ENCODE measurements at regions of chr4 and their contacts with region 1.

Region 1: GRCh38 chr4:124275-125081 is at the start of gene ZNF718:
- DNase-seq: peak; percentile 98
- H3K4me3 Mint-ChIP-seq: peak within 1 kb of the TSS; percentile 90
- H3K27ac Mint-ChIP-seq: peak within 1 kb of the TSS; percentile 98
- H3K4me1 Mint-ChIP-seq: peaks cover 22% of the 10 kb centered on the region
- H3K27me3 Mint-ChIP-seq: no peaks in the 10 kb centered on the region
- total RNA-seq, gene ZNF718: 12.2 to 12.8 TPM

Region 2: DNA sequence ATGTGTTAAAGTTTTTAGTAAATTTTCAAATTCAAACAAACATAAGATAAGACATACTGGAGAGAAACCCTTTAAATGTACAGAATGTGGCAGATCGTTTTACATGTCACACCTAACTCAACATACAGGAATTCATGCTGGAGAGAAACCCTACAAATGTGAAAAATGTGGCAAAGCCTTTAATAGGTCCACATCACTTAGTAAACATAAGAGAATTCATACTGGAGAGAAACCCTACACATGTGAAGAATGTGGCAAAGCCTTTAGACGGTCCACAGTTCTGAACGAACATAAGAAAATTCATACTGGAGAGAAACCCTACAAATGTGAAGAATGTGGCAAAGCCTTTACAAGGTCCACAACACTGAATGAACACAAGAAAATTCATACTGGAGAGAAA is 38.5 kb before region 1 on chr4:
- CTCF ChIA-PET with region 1: no interaction called
- intact Hi-C with region 1: no loop called
- DNase-seq: no peak
- H3K4me3 Mint-ChIP-seq: no peak overlapping the region
- H3K27ac Mint-ChIP-seq: no peak overlapping the region
- H3K4me1 Mint-ChIP-seq: no peaks in the 10 kb centered on the region
- H3K27me3 Mint-ChIP-seq: no peaks in the 10 kb centered on the region

Region 3: GRCh38 chr4:242121-242848 is 117.8 kb after region 1 on chr4:
- CTCF ChIA-PET with region 1: no interaction called
- intact Hi-C with region 1: loop called (anchors 5 kb)
- DNase-seq: peak; percentile 79
- H3K4me3 Mint-ChIP-seq: peak overlapping the region; percentile 79
- H3K27ac Mint-ChIP-seq: peak overlapping the region; percentile 55
- H3K4me1 Mint-ChIP-seq: peaks cover 7% of the 10 kb centered on the region
- H3K27me3 Mint-ChIP-seq: no peaks in the 10 kb centered on the region

Region 4: GRCh38 chr4:337143-337931 is 212.9 kb after region 1 on chr4 and contains the start of gene ZNF141:
- CTCF ChIA-PET with region 1: no interaction called
- intact Hi-C with region 1: loop called (anchors 5 kb)
- DNase-seq: peak; percentile 96
- H3K4me3 Mint-ChIP-seq: peak within 1 kb of the TSS; percentile 99
- H3K27ac Mint-ChIP-seq: peak within 1 kb of the TSS; percentile 99
- H3K4me1 Mint-ChIP-seq: peaks cover 22% of the 10 kb centered on the region
- H3K27me3 Mint-ChIP-seq: no peaks in the 10 kb centered on the region
- total RNA-seq, gene ZNF141: 21.2 to 23.2 TPM

Region 5: GRCh38 chr4:473570-474457 is 349.3 kb after region 1 on chr4:
- CTCF ChIA-PET with region 1: no interaction called
- intact Hi-C with region 1: loop called (anchors 5 kb)
- DNase-seq: peak; percentile 97
- H3K4me3 Mint-ChIP-seq: peak overlapping the region; percentile 99
- H3K27ac Mint-ChIP-seq: peak overlapping the region; percentile 99
- H3K4me1 Mint-ChIP-seq: peaks cover 19% of the 10 kb centered on the region
- H3K27me3 Mint-ChIP-seq: no peaks in the 10 kb centered on the region

Region 6: DNA sequence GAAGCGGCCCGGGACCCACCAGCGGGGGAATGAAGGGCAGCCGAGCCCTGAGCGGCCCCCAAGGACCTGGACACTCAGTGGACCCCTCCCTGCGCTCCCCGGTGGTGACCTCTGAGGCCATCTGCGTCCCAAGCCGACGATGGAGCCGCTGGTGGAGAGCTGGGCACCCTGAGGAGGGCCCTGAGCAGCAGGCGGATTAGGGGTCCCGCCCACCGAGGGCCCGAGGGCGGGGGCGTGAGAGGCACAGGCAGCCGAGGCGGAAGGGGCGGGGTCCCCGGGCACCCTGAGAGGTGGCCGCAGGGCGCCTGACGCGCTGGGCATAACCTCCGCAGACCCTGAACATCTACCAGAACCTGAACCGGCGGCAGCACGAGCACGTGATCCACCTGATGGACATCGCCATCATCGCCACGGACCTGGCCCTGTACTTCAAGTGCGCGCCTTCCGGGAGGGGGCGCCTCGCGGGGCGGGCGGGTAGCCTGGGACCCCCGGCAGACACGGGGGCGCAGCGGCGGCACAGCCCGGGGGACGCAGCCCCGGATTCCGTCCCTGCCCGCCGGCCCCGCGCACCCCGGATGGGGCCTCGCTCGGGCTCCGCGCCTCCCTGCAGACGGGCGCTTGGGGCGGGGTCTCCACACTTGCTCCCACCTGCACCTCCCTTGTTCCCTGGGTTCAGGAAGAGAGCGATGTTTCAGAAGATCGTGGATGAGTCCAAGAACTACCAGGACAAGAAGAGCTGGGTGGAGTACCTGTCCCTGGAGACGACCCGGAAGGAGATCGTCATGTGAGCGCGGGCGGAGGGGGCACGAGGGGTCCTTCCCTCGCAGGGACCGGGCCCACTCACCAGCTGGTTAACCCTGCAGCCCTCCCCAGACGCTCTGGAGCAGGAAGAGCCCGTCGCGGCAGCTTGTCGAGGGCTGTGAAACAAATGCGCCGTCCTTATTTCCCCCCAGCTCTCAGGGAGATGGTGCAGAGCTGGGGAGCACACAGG is 539.3 kb after region 1 on chr4:
- CTCF ChIA-PET with region 1: no interaction called
- intact Hi-C with region 1: loop called (anchors 5 kb)
- DNase-seq: peak; percentile 74
- H3K4me3 Mint-ChIP-seq: peak overlapping the region; percentile 82
- H3K27ac Mint-ChIP-seq: peak overlapping the region; percentile 84
- H3K4me1 Mint-ChIP-seq: peaks cover 18% of the 10 kb centered on the region
- H3K27me3 Mint-ChIP-seq: no peaks in the 10 kb centered on the region